Activated CD4-positive, alpha-beta T cell treated with anti-CD3 and anti-CD28 coated beads for 36 hours (primary cell): ENCODE measurements at regions of chr2 and their contacts with region 1.

Region 1: DNA sequence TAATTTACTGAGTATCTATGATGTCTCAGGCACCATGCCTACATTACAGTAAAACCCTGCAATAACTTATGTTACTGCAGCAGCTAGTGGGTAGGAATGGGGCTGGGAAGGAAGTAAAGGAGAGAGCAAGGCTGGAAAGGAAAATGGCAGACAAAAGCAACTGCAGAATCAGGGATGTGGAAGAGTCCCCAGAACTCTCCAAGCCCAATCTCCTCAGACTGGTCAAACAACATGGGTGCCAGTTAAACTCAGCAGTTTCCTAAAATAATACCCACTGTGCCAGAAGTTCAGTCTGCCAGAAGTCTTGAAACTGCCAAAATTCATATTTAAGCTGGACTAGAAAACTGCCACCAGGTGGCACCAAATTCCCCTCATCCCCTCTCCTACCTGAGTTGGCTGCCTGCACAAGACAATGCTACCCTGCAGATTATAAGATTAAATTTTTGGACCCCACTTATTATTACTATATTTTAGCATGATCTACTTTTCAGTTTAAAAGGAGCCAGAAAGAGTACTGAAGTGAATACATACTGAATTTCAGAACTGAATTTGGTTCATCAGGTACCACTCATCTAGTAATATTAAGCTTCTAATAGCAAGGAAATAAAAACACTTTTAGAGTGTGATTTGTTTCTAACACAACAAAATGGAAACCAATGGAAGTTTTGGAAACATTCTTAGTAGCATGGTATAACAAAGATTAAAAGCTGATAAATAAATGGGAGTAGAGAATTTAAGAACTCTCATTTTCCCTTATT is 86.8 kb upstream of the DNER start:
- DNase-seq: peak; percentile 86
- ATAC-seq: peak; percentile 78
- H3K4me3 Mint-ChIP-seq: no peak overlapping the region
- H3K27ac Mint-ChIP-seq: no peak overlapping the region
- H3K4me1 Mint-ChIP-seq: no peaks in the 10 kb centered on the region
- H3K27me3 Mint-ChIP-seq: no peaks in the 10 kb centered on the region

Region 2: DNA sequence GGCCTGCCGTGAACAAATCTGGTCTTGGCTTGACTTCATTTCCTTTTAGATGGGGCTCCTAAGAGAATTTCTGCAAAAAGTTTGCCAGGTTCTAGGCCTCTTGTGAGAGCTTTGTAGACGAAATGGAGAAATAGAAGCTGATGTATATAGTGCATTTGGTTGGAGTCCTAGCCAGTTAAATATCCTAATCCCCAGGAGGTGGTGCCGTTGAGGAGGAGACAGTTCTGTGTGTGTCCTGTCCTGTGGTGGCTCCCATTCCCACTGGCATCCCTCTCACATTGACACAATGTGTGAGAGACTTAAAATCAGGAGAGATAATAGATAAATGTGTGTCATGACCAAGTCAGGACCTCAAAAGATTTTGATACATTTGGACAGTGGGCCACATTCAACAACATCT is 52.2 kb before region 1 on chr2:
- CTCF ChIA-PET with region 1: no interaction called
- POLR2A ChIA-PET with region 1: interaction called, 12 read pairs
- intact Hi-C with region 1: no loop called
- DNase-seq: no peak
- ATAC-seq: no peak
- H3K4me3 Mint-ChIP-seq: no peak overlapping the region
- H3K27ac Mint-ChIP-seq: no peak overlapping the region
- H3K4me1 Mint-ChIP-seq: peaks cover 3% of the 10 kb centered on the region
- H3K27me3 Mint-ChIP-seq: peaks cover 2% of the 10 kb centered on the region

Region 3: GRCh38 chr2:229761663-229762062 is 39.5 kb before region 1 on chr2:
- CTCF ChIA-PET with region 1: no interaction called
- POLR2A ChIA-PET with region 1: no interaction called
- intact Hi-C with region 1: no loop called
- DNase-seq: no peak
- ATAC-seq: no peak
- H3K4me3 Mint-ChIP-seq: no peak overlapping the region
- H3K27ac Mint-ChIP-seq: no peak overlapping the region
- H3K4me1 Mint-ChIP-seq: no peaks in the 10 kb centered on the region
- H3K27me3 Mint-ChIP-seq: no peaks in the 10 kb centered on the region

Region 4: DNA sequence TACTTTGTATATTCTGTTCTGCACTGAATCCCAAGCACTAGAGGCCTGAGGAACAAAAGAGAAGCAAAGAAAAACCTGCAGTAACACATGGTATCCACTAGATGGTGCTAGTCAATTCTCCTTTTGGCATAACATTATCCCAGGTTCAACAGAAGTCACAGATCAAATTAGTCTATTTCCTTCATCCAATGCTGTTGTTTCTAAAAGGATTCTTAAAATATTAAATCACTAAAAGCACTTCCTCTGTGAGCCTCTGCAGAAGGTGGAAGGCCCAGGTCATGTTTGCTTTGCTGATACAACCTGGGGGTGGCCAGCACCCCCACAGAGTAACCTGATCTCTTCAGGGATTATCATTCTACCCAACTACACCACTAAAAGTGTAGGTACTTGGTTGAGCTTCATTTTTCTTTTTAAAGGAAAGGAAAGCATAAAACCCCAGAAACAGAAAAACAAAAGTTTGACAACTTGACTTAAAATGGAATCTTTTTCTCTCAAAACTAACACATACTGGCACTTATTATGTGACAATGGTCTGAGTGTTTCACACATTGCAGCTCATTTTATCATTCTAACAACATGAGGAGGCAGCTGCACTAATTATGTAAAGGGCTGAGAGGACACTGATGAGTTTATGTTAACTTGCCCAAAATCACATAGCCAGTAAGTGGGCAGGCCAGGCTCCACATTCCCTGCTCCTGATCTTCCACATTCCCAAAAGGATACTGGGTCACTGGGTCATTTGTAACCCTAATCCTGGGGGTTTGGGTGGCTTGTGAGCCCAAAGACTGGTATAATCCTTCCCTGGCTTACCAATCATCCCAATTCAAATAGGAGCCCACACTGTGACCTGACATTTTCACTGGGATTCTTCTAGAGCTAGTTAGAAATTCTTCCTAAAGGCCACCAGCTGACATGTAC is 20.1 kb before region 1 on chr2:
- CTCF ChIA-PET with region 1: interaction called, 19 read pairs
- POLR2A ChIA-PET with region 1: no interaction called
- intact Hi-C with region 1: no loop called
- DNase-seq: no peak
- ATAC-seq: peak; percentile 68
- H3K4me3 Mint-ChIP-seq: no peak overlapping the region
- H3K27ac Mint-ChIP-seq: no peak overlapping the region
- H3K4me1 Mint-ChIP-seq: peaks cover 15% of the 10 kb centered on the region
- H3K27me3 Mint-ChIP-seq: no peaks in the 10 kb centered on the region

Region 5: DNA sequence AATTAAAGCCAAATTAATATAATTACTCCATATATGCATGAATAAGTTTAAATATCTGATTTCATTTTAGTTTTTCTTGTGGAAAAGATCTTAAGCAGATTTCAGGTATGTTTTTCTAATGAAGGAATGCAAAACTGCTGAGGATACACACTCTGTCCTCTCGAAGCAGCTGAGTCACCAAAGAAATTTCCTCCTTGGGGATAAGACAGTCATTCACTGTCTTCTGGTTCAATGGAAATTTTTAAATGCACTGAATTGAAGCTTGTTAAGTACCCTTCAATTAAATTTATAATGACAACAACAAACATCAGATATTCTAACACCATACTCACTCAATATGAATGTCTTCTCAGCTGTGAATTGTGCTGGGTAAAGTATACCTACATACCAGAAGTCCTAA is 14.7 kb after region 1 on chr2:
- CTCF ChIA-PET with region 1: interaction called, 16 read pairs
- POLR2A ChIA-PET with region 1: no interaction called
- intact Hi-C with region 1: no loop called
- DNase-seq: no peak
- ATAC-seq: no peak
- H3K4me3 Mint-ChIP-seq: no peak overlapping the region
- H3K27ac Mint-ChIP-seq: no peak overlapping the region
- H3K4me1 Mint-ChIP-seq: peaks cover 6% of the 10 kb centered on the region
- H3K27me3 Mint-ChIP-seq: no peaks in the 10 kb centered on the region

Region 6: GRCh38 chr2:229825476-229825875 is 24.3 kb after region 1 on chr2:
- CTCF ChIA-PET with region 1: interaction called, 10 read pairs
- POLR2A ChIA-PET with region 1: no interaction called
- intact Hi-C with region 1: no loop called
- DNase-seq: no peak
- ATAC-seq: no peak
- H3K4me3 Mint-ChIP-seq: no peak overlapping the region
- H3K27ac Mint-ChIP-seq: no peak overlapping the region
- H3K4me1 Mint-ChIP-seq: peaks cover 21% of the 10 kb centered on the region
- H3K27me3 Mint-ChIP-seq: no peaks in the 10 kb centered on the region

Region 7: GRCh38 chr2:229910832-229911412 is 109.7 kb after region 1 on chr2:
- CTCF ChIA-PET with region 1: interaction called, 23 read pairs
- POLR2A ChIA-PET with region 1: no interaction called
- intact Hi-C with region 1: loop called (anchors 1 to 2 kb)
- DNase-seq: peak; percentile 38
- ATAC-seq: peak; percentile 75
- H3K4me3 Mint-ChIP-seq: no peak overlapping the region
- H3K27ac Mint-ChIP-seq: peak overlapping the region; percentile 2
- H3K4me1 Mint-ChIP-seq: peaks cover 52% of the 10 kb centered on the region
- H3K27me3 Mint-ChIP-seq: no peaks in the 10 kb centered on the region

Region 8: DNA sequence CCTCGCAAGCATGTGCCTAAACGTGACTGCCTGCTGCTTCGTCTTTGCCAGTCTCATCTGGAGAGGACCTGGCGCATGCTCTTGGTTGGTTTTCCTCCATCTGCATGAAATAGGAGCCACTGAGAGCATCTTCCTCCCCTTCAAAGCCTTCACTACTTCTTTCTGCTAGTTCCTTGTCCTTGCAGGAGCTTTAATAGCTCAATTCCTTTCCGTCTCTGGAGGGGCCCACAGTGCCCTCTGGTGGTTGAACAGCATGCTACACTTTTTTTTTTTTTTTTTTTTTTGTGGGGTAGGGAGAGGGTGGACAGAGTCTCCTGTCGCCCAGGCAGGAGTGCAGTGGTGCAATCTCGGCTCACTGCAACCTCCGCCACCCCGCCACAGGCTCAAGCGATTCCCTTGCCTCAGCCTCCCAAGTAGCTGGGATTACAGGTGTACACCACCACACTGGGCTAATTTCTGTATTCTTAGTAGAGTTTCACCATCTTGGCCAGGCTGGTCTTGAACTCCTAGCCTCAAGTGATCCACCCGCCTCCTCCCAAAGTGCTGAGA is 359.0 kb after region 1 on chr2:
- CTCF ChIA-PET with region 1: interaction called, 7 read pairs
- POLR2A ChIA-PET with region 1: no interaction called
- intact Hi-C with region 1: loop called in 1 of 2 experiments (anchors 5 kb)
- DNase-seq: peak; percentile 72
- ATAC-seq: peak; percentile 59
- H3K4me3 Mint-ChIP-seq: no peak overlapping the region
- H3K27ac Mint-ChIP-seq: no peak overlapping the region
- H3K4me1 Mint-ChIP-seq: peaks cover 8% of the 10 kb centered on the region
- H3K27me3 Mint-ChIP-seq: no peaks in the 10 kb centered on the region